Breast epithelium (tissue), 4 donors: ENCODE measurements at regions of chr2 and their contacts with region 1.

Region 1: DNA sequence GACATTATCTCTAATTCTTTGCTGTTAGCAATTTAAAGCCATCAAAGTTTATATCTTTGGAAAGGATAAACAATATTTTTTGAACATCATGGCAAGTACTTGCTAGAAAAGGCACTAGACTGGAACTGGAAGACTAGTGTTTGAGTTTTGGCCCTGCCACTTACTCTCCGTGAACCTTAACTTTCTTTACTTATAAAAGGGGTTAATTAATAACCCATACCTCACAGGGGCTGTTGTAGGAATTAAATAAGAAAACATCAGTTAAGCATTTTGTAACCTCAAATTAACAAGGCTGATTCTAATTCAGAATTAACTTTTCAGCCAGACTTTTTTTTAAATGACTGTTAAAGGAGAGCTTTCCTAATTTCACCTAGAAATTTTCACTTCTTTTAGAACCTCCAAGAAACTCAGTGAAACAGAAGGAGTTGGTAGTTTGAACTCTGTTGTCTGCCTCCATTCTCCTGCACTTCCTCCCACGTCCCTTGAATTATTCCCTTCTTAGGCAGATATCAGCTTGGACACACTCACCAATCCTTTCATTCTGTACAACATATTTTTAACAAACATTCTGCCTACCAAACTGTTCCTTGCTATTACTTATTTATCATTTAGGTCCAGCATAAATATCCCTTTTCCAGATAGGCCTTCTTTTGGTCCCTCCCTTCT is 79.5 kb downstream of the COX7A2L start:
- DNase-seq: no peak
- H3K4me3 ChIP-seq: no peak overlapping the region
- H3K27ac ChIP-seq: no peak overlapping the region
- H3K4me1 ChIP-seq: no peaks in the 10 kb centered on the region
- H3K27me3 ChIP-seq: no peaks in the 10 kb centered on the region
- CTCF ChIP-seq: no peak
- POLR2A ChIP-seq: no peak

Region 2: GRCh38 chr2:41527525-41528323 is 753.8 kb before region 1 on chr2:
- intact Hi-C with region 1: loop called (anchors 5 kb)
- DNase-seq: no peak
- H3K4me3 ChIP-seq: no peak overlapping the region
- H3K27ac ChIP-seq: no peak overlapping the region
- H3K4me1 ChIP-seq: no peaks in the 10 kb centered on the region
- H3K27me3 ChIP-seq: no peaks in the 10 kb centered on the region
- CTCF ChIP-seq: no peak
- POLR2A ChIP-seq: no peak

Region 3: DNA sequence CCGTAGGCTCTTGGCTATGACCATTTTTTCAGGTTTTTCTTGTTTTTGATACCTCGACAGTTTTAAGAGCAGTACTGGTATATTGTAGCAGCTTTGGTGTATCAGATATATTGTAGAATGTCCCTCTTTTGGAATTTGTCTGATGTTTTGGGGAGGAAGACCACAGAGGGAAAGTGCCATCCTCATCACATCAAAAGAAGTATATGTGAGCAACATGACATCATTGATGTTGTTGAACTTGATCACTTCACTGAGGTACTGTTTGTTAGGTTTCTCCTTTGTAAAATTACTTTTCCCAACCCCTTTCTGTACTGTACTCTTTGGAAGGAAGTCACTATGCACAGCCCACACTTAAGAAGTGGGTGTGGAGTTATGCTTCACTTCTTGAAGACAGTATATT is 71.3 kb before region 1 on chr2:
- intact Hi-C with region 1: no loop called
- DNase-seq: no peak
- H3K4me3 ChIP-seq: no peak overlapping the region
- H3K27ac ChIP-seq: no peak overlapping the region
- H3K4me1 ChIP-seq: no peaks in the 10 kb centered on the region
- H3K27me3 ChIP-seq: no peaks in the 10 kb centered on the region
- CTCF ChIP-seq: no peak
- POLR2A ChIP-seq: no peak

Region 4: GRCh38 chr2:43010438-43011157 is 729.0 kb after region 1 on chr2:
- intact Hi-C with region 1: no loop called
- DNase-seq: peak in 1 of 2 donors; percentile 21
- H3K4me3 ChIP-seq: no peak overlapping the region
- H3K27ac ChIP-seq: peak overlapping the region in 1 of 2 donors; percentile 70
- H3K4me1 ChIP-seq: peaks cover 0 to 5% of the 10 kb centered on the region in 2 donors
- H3K27me3 ChIP-seq: no peaks in the 10 kb centered on the region
- CTCF ChIP-seq: no peak
- POLR2A ChIP-seq: no peak